ENCODE measurements at regions of chr14 and their contacts with region 1.

Region 1: DNA sequence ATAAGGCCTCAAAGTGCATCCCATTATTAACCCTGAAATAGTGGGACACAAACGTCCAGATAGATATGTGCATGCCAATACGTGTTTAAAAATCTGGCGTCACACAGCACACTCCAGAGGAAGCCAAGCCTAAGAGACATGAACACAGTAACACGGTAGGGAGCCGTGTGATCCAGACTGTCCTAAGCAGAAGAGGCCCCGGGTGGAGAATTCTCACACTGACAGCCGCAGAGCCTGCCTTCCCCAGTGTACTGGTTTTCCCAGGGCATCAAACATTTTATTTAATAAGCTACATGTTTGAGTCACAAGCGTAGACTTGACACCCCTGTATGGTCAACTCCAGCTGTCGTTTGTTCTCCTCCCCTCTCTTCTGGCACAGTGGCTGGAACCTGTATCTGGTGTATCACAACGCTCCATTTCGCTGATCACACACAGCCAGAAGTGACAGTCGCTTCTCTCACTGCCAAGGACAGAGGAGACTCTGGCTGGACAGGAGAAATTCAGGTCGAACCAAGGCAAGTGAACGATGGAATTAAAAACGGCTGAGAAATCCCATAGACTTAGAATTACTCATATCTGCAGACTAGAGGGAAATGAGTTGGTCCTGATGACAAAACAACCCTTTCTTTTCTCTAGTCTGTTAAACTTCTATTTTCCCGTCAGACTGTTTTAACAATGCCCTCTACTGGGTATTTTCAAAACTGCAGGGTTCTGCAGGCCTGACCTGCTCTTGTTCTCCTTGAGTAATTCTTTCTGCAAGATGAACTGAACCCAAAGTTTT is 359.9 kb downstream of the RGS6 start:
- DNase-seq: peak in 2 of 6 donors; percentile 5 to 17
- ATAC-seq: peak in 3 of 4 donors; percentile 73 to 80 (median 75)
- H3K4me3 ChIP-seq: no peak overlapping the region
- H3K27ac ChIP-seq: no peak overlapping the region
- H3K4me1 ChIP-seq: no peaks in the 10 kb centered on the region
- H3K27me3 ChIP-seq: no peaks in the 10 kb centered on the region
- CTCF ChIP-seq: peak; percentile 37 to 74 (median 53)

Region 2: GRCh38 chr14:72023722-72024407 is 268.2 kb before region 1 on chr14:
- intact Hi-C with region 1: loop called in 1 of 3 experiments (anchors 10 kb)
- DNase-seq: peak in 4 of 6 donors; percentile 16 to 39 (median 17)
- ATAC-seq: peak; percentile 55 to 85 (median 75)
- H3K4me3 ChIP-seq: no peak overlapping the region
- H3K27ac ChIP-seq: no peak overlapping the region
- H3K4me1 ChIP-seq: no peaks in the 10 kb centered on the region
- H3K27me3 ChIP-seq: peaks cover 0 to 5% (median 0%) of the 10 kb centered on the region in 4 donors
- CTCF ChIP-seq: peak; percentile 34 to 60 (median 54)